ENCODE measurements at regions of chr21 and their contacts with region 1.

Region 1: GRCh38 chr21:15766952-15767603 is 37.3 kb downstream of the USP25 start:
- DNase-seq: no peak
- ATAC-seq: no peak
- H3K4me3 ChIP-seq: no peak overlapping the region
- H3K4me3 Mint-ChIP-seq: no peak overlapping the region
- H3K27ac ChIP-seq: no peak overlapping the region
- H3K27ac Mint-ChIP-seq: peak overlapping the region in 4 of 9 donors; percentile 18 to 67 (median 46)
- H3K4me1 ChIP-seq: peaks cover 0 to 5% of the 10 kb centered on the region in 2 donors
- H3K4me1 Mint-ChIP-seq: peaks cover 24 to 89% (median 70%) of the 10 kb centered on the region in 7 donors
- H3K27me3 ChIP-seq: no peaks in the 10 kb centered on the region
- H3K27me3 Mint-ChIP-seq: no peaks in the 10 kb centered on the region

Region 2: GRCh38 chr21:15735409-15735808 is 31.7 kb before region 1 on chr21:
- CTCF ChIA-PET with region 1: no interaction called
- POLR2A ChIA-PET with region 1: no interaction called
- intact Hi-C with region 1: loop called in 1 of 2 experiments (anchors 2 kb)
- DNase-seq: no peak
- ATAC-seq: no peak
- H3K4me3 ChIP-seq: no peak overlapping the region
- H3K4me3 Mint-ChIP-seq: peak overlapping the region in 9 of 10 donors; percentile 22 to 98 (median 60)
- H3K27ac ChIP-seq: no peak overlapping the region
- H3K27ac Mint-ChIP-seq: peak overlapping the region in 6 of 9 donors; percentile 8 to 86 (median 74)
- H3K4me1 ChIP-seq: peaks cover 52 to 58% of the 10 kb centered on the region in 2 donors
- H3K4me1 Mint-ChIP-seq: peaks cover 59 to 96% (median 88%) of the 10 kb centered on the region in 7 donors
- H3K27me3 ChIP-seq: no peaks in the 10 kb centered on the region
- H3K27me3 Mint-ChIP-seq: no peaks in the 10 kb centered on the region

Region 3: GRCh38 chr21:15749082-15749860 is 17.8 kb before region 1 on chr21:
- CTCF ChIA-PET with region 1: no interaction called
- POLR2A ChIA-PET with region 1: no interaction called
- intact Hi-C with region 1: loop called in 1 of 2 experiments (anchors 2 kb)
- DNase-seq: no peak
- ATAC-seq: no peak
- H3K4me3 ChIP-seq: no peak overlapping the region
- H3K4me3 Mint-ChIP-seq: peak overlapping the region in 7 of 10 donors; percentile 2 to 61 (median 37)
- H3K27ac ChIP-seq: no peak overlapping the region
- H3K27ac Mint-ChIP-seq: no peak overlapping the region
- H3K4me1 ChIP-seq: peaks cover 23 to 26% of the 10 kb centered on the region in 2 donors
- H3K4me1 Mint-ChIP-seq: peaks cover 33 to 98% (median 82%) of the 10 kb centered on the region in 7 donors
- H3K27me3 ChIP-seq: no peaks in the 10 kb centered on the region
- H3K27me3 Mint-ChIP-seq: no peaks in the 10 kb centered on the region

Region 4: GRCh38 chr21:15781806-15782705 is 15.0 kb after region 1 on chr21:
- CTCF ChIA-PET with region 1: no interaction called
- POLR2A ChIA-PET with region 1: no interaction called
- intact Hi-C with region 1: loop called (anchors 2 kb)
- DNase-seq: no peak
- ATAC-seq: no peak
- H3K4me3 ChIP-seq: no peak overlapping the region
- H3K4me3 Mint-ChIP-seq: peak overlapping the region in 1 of 10 donors; percentile 25
- H3K27ac ChIP-seq: no peak overlapping the region
- H3K27ac Mint-ChIP-seq: no peak overlapping the region
- H3K4me1 ChIP-seq: peaks cover 0 to 7% of the 10 kb centered on the region in 2 donors
- H3K4me1 Mint-ChIP-seq: peaks cover 16 to 47% (median 41%) of the 10 kb centered on the region in 7 donors
- H3K27me3 ChIP-seq: no peaks in the 10 kb centered on the region
- H3K27me3 Mint-ChIP-seq: no peaks in the 10 kb centered on the region

Region 5: GRCh38 chr21:15804247-15805005 is 37.3 kb after region 1 on chr21:
- CTCF ChIA-PET with region 1: no interaction called
- POLR2A ChIA-PET with region 1: no interaction called
- intact Hi-C with region 1: loop called in 1 of 2 experiments (anchors 2 kb)
- DNase-seq: no peak
- ATAC-seq: no peak
- H3K4me3 ChIP-seq: no peak overlapping the region
- H3K4me3 Mint-ChIP-seq: no peak overlapping the region
- H3K27ac ChIP-seq: no peak overlapping the region
- H3K27ac Mint-ChIP-seq: peak overlapping the region in 1 of 9 donors; percentile 51
- H3K4me1 ChIP-seq: no peaks in the 10 kb centered on the region
- H3K4me1 Mint-ChIP-seq: peaks cover 5 to 34% (median 19%) of the 10 kb centered on the region in 7 donors
- H3K27me3 ChIP-seq: no peaks in the 10 kb centered on the region
- H3K27me3 Mint-ChIP-seq: no peaks in the 10 kb centered on the region

Region 6: GRCh38 chr21:15908187-15908586 is 141.1 kb after region 1 on chr21:
- CTCF ChIA-PET with region 1: no interaction called
- POLR2A ChIA-PET with region 1: no interaction called
- intact Hi-C with region 1: no loop called
- DNase-seq: no peak
- ATAC-seq: no peak
- H3K4me3 ChIP-seq: no peak overlapping the region
- H3K4me3 Mint-ChIP-seq: no peak overlapping the region
- H3K27ac ChIP-seq: no peak overlapping the region
- H3K27ac Mint-ChIP-seq: no peak overlapping the region
- H3K4me1 ChIP-seq: no peaks in the 10 kb centered on the region
- H3K4me1 Mint-ChIP-seq: no peaks in the 10 kb centered on the region
- H3K27me3 ChIP-seq: no peaks in the 10 kb centered on the region
- H3K27me3 Mint-ChIP-seq: no peaks in the 10 kb centered on the region